Sciatic nerve (tissue), 2 donors: ENCODE measurements at regions of chrX and their contacts with region 1.

Region 1: DNA sequence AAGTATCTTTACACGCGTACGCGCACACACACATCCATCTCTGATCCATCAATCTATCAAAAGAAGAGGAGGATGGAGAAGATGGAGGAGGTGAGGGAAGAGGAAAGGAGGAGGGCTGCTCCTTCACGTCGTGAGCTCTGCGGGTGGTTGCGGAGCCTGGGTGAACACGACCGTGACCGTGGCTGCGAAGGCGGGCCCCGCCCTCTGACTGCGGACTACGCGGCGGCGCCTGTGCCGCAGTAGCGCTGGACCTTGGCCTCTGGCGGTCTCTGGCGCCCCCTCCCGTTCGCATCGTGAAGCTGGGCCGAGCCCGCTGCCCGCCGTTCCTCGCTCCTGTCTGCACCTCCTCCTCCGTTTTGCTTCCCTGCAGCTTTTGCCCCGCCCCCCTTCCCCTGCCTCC is 37.7 kb upstream of the ARAF start:
- DNase-seq: peak; percentile 91
- ATAC-seq: peak; percentile 98

Region 2: GRCh38 chrX:47193475-47194193 is 329.7 kb before region 1 on chrX and contains the start of gene UBA1:
- intact Hi-C with region 1: loop called (anchors 10 kb)
- DNase-seq: peak; percentile 99
- ATAC-seq: peak; percentile 96
- total RNA-seq, gene UBA1: 165 TPM

Region 3: GRCh38 chrX:47373198-47373597 is 150.1 kb before region 1 on chrX:
- intact Hi-C with region 1: loop called (anchors 10 kb)
- DNase-seq: no peak
- ATAC-seq: no peak